Endothelial cell of umbilical vein (primary cell): ENCODE measurements at regions of chr2 and their contacts with region 1.

Region 1: DNA sequence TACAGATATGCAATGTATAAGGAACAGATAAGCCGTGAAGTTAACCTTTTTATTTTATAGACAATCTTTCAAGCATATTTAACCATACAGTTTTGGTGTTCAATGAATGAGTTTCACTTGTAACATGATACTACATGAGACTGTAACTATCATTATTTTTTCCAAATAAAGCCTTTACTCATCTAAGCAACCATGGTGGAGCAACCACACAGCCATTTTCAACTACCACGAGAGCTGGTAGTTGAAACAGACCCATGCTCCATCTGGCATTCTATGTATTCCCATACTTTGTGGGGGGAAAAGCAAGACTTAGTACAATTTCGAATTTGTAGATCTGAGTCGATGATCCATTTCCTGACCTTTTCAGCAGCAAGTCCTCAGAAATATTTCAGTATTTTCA is 159.3 kb upstream of the RND3 start:
- DNase-seq: no peak
- H3K4me3 ChIP-seq: no peak overlapping the region
- H3K27ac ChIP-seq: no peak overlapping the region
- H3K4me1 ChIP-seq: no peaks in the 10 kb centered on the region
- H3K27me3 ChIP-seq: no peaks in the 10 kb centered on the region
- CTCF ChIP-seq: no peak
- POLR2A ChIP-seq: no peak

Region 2: DNA sequence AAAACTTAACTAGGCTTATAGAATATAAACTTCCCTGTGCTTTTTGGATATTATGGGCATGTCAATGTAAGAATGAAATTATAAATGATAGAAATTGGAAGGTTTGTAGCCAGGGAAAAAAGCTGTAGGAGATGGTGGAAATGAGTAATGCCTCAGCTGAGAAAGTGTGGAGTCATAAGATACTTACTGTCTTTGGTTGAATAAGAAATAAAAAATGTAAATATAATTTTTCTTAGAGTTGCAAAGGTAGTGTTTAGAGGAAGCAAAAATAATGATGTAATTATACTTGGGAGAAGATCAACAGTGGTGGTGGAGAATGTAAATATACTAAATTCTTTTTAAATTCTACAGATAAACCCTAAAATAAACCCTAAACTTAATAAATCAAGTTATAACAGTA is 133.1 kb before region 1 on chr2:
- CTCF ChIA-PET with region 1: no interaction called
- POLR2A ChIA-PET with region 1: no interaction called
- dilution Hi-C with region 1: no loop called
- intact Hi-C with region 1: no loop called
- DNase-seq: no peak
- H3K4me3 ChIP-seq: no peak overlapping the region
- H3K27ac ChIP-seq: no peak overlapping the region
- H3K4me1 ChIP-seq: no peaks in the 10 kb centered on the region
- H3K27me3 ChIP-seq: no peaks in the 10 kb centered on the region
- CTCF ChIP-seq: no peak
- POLR2A ChIP-seq: no peak

Region 3: DNA sequence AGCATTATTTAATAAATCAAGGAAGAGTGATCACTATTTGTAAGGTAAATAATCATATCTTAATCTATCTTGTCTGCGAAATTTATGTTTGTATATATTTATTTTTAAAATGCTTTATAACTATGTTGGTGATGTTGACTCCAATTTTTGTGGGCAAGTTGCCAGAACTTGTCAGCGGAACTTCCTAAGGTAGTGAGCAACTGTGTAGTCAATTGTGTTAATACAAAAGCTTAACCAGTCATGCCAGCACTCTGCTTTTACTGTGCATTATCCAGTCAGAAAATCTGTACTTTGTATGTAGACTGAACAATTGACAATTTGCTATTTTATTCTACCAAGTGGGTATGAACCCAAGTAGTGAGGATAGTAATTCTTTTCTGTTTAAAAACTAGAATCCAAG is 97.4 kb before region 1 on chr2:
- CTCF ChIA-PET with region 1: no interaction called
- POLR2A ChIA-PET with region 1: interaction called, 11 read pairs
- dilution Hi-C with region 1: no loop called
- intact Hi-C with region 1: no loop called
- DNase-seq: peak; percentile 51
- H3K4me3 ChIP-seq: no peak overlapping the region
- H3K27ac ChIP-seq: no peak overlapping the region
- H3K4me1 ChIP-seq: peaks cover 5% of the 10 kb centered on the region
- H3K27me3 ChIP-seq: no peaks in the 10 kb centered on the region
- CTCF ChIP-seq: no peak
- POLR2A ChIP-seq: no peak